ENCODE measurements at regions of chr5 and their contacts with region 1.

Region 1: DNA sequence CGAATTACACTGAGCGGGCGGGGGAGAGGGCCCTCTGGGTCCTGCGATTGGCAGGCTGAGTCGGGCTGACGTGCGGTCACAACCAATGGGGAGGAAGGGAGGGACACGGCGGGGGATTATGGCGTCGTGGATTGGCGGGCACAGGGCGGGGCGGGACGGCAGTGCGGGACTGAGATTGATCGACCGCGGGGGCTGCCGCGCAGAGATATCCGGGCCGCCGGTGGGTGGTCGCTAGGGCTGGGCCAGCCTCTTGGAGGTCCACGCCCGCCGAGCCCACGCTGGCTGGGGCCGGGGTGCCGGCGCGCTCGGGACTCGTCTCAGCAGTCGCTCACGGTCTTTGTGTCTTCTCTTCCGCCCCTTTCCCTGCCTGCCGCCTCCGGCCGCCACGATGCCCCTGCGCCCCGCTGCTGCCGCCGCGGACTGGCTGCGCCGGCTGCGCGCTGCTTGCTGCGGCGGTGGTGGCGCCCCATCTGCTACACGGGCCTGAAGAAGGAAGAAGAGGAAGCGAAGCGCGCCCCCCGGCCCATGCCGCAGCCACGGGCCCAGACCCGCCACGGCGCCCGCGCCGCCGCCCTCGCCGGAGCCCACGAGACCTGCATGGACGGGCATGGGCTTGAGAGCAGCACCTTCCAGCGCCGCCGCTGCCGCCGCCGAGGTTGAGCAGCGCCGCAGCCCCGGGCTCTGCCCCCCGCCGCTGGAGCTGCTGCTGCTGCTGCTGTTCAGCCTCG is at the start of gene RGMB:
- DNase-seq: peak; percentile 85
- ATAC-seq: peak; percentile 89
- H3K4me3 ChIP-seq: peak within 1 kb of the TSS; percentile 93
- H3K27ac ChIP-seq: peak within 1 kb of the TSS; percentile 62
- H3K4me1 ChIP-seq: peaks cover 17% of the 10 kb centered on the region
- H3K27me3 ChIP-seq: peaks cover 2 to 5% of the 10 kb centered on the region in 2 experiments; a peak in 3 of 4 replicates
- CTCF ChIP-seq: no peak
- EP300 ChIP-seq: no peak
- POLR2A ChIP-seq: peak; percentile 86
- RAD21 ChIP-seq: no peak
- polyA plus RNA-seq, gene RGMB: 1.3 to 2.4 TPM

Region 2: GRCh38 chr5:97192580-97193358 is 1580.9 kb before region 1 on chr5:
- CTCF ChIA-PET with region 1: no interaction called
- POLR2A ChIA-PET with region 1: no interaction called
- RAD21 ChIA-PET with region 1: interaction called, 3 read pairs
- SMC1A ChIA-PET with region 1: interaction called, 3 read pairs
- in situ Hi-C with region 1: no loop called
- intact Hi-C with region 1: loop called (anchors 5 kb)
- DNase-seq: peak; percentile 63
- ATAC-seq: peak; percentile 94
- H3K4me3 ChIP-seq: 0 out of 2 replicates have a peak overlapping the region, but pooled peaks have one; percentile 32
- H3K27ac ChIP-seq: peak overlapping the region; percentile 73
- H3K4me1 ChIP-seq: peaks cover 8% of the 10 kb centered on the region
- H3K27me3 ChIP-seq: no peaks in the 10 kb centered on the region
- CTCF ChIP-seq: no peak
- EP300 ChIP-seq: peak; percentile 28 to 49; a peak in 1 of 4 replicates
- POLR2A ChIP-seq: no peak
- RAD21 ChIP-seq: no peak

Region 3: GRCh38 chr5:97355775-97356174 is 1417.9 kb before region 1 on chr5:
- CTCF ChIA-PET with region 1: interaction called, 3 read pairs
- POLR2A ChIA-PET with region 1: no interaction called
- RAD21 ChIA-PET with region 1: interaction called, 3 read pairs
- SMC1A ChIA-PET with region 1: interaction called, 4 read pairs
- in situ Hi-C with region 1: no loop called
- intact Hi-C with region 1: loop called (anchors 5 kb)
- DNase-seq: peak; percentile 74
- ATAC-seq: peak; percentile 90
- H3K4me3 ChIP-seq: peak overlapping the region; percentile 68
- H3K27ac ChIP-seq: peak overlapping the region; percentile 68
- H3K4me1 ChIP-seq: peaks cover 11% of the 10 kb centered on the region
- H3K27me3 ChIP-seq: no peaks in the 10 kb centered on the region
- CTCF ChIP-seq: no peak
- EP300 ChIP-seq: 0 out of 4 replicates have a peak, but pooled peaks of 1 of the 2 experiments have one; percentile 4
- POLR2A ChIP-seq: 0 out of 2 replicates have a peak, but pooled peaks have one; percentile 32
- RAD21 ChIP-seq: no peak

Region 4: GRCh38 chr5:97547999-97548738 is 1225.5 kb before region 1 on chr5:
- CTCF ChIA-PET with region 1: interaction called, 3 read pairs
- POLR2A ChIA-PET with region 1: no interaction called
- RAD21 ChIA-PET with region 1: no interaction called
- SMC1A ChIA-PET with region 1: no interaction called
- in situ Hi-C with region 1: no loop called
- intact Hi-C with region 1: loop called (anchors 5 kb)
- DNase-seq: peak; percentile 42
- ATAC-seq: peak; percentile 85
- H3K4me3 ChIP-seq: no peak overlapping the region
- H3K27ac ChIP-seq: peak overlapping the region; percentile 45; the same call in 1 of the 2 replicates
- H3K4me1 ChIP-seq: peaks cover 11% of the 10 kb centered on the region
- H3K27me3 ChIP-seq: no peaks in the 10 kb centered on the region
- CTCF ChIP-seq: no peak
- EP300 ChIP-seq: peak; percentile 23 to 68; a peak in 2 of 4 replicates
- POLR2A ChIP-seq: no peak
- RAD21 ChIP-seq: no peak

Region 5: GRCh38 chr5:98721231-98721928 is 52.2 kb before region 1 on chr5:
- CTCF ChIA-PET with region 1: no interaction called
- POLR2A ChIA-PET with region 1: no interaction called
- RAD21 ChIA-PET with region 1: no interaction called
- SMC1A ChIA-PET with region 1: no interaction called
- in situ Hi-C with region 1: no loop called
- intact Hi-C with region 1: no loop called
- DNase-seq: no peak
- ATAC-seq: no peak
- H3K4me3 ChIP-seq: no peak overlapping the region
- H3K27ac ChIP-seq: no peak overlapping the region
- H3K4me1 ChIP-seq: no peaks in the 10 kb centered on the region
- H3K27me3 ChIP-seq: no peaks in the 10 kb centered on the region
- CTCF ChIP-seq: no peak
- EP300 ChIP-seq: no peak
- POLR2A ChIP-seq: no peak
- RAD21 ChIP-seq: no peak

Region 6: GRCh38 chr5:98905857-98906690 is 132.4 kb after region 1 on chr5:
- CTCF ChIA-PET with region 1: no interaction called
- POLR2A ChIA-PET with region 1: no interaction called
- RAD21 ChIA-PET with region 1: no interaction called
- SMC1A ChIA-PET with region 1: no interaction called
- in situ Hi-C with region 1: no loop called
- intact Hi-C with region 1: loop called (anchors 5 kb)
- DNase-seq: no peak
- ATAC-seq: peak; percentile 70
- H3K4me3 ChIP-seq: no peak overlapping the region
- H3K27ac ChIP-seq: no peak overlapping the region
- H3K4me1 ChIP-seq: no peaks in the 10 kb centered on the region; the same call in 1 of the 2 replicates
- H3K27me3 ChIP-seq: no peaks in the 10 kb centered on the region
- CTCF ChIP-seq: peak; percentile 47 to 65 (median 47); a peak in 5 of 6 replicates
- EP300 ChIP-seq: no peak
- POLR2A ChIP-seq: no peak
- RAD21 ChIP-seq: peak; percentile 92